IMR-90 (cell line): ENCODE measurements at regions of chr19 and their contacts with region 1.

Region 1: DNA sequence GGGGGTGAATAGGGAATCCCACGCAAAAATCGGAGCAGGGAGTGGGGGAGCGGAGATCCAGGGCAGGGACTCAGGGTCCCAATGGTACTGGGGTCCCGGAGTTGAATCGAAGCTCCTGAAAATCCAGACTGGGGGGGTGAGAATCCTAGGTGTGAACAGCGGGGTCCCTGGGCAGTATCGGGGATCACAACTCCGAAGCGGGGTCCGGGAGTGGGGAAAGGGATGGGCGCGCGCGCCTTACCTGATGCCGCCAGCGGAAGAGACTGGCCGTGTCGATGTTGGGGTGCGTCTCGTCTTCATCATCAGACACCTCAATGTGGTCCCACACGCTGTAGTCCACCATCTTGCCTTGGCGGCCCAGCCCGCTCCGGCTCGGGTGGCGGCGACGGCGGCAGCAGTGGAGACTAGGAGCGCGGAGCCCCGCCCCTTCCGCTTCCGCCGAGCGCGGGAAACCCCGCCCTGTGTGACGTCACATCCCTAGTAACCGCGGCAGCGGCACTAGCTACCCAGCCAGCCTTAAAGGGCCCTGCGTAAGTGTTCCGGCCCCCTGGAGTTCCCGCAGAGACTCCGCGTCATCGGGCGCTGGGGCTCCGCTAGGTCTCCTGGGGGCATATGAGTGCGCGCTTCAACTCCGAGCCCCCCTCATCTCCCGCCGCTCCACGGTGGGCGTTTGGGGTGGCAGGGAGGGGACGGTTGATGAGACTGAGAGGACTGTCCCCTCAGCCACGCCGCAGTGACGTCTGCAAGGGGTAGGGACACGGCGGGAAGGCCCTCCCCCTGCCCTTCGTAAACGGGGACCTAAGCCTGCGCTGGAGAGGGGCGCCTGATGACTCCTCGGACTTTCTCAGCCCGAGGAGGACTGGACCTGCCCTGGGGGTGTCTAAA is at the start of gene CDC37:
- DNase-seq: peak; percentile 97
- ATAC-seq: peak; percentile 79
- H3K4me3 ChIP-seq: peak within 1 kb of the TSS; percentile 98
- H3K27ac ChIP-seq: peak within 1 kb of the TSS; percentile 95
- H3K4me1 ChIP-seq: peaks cover 4% of the 10 kb centered on the region
- H3K27me3 ChIP-seq: no peaks in the 10 kb centered on the region
- CTCF ChIP-seq: no peak
- POLR2A ChIP-seq: peak; percentile 98
- RAD21 ChIP-seq: no peak
- total RNA-seq, gene CDC37: 209 and 248 TPM in 2 replicates

Region 2: DNA sequence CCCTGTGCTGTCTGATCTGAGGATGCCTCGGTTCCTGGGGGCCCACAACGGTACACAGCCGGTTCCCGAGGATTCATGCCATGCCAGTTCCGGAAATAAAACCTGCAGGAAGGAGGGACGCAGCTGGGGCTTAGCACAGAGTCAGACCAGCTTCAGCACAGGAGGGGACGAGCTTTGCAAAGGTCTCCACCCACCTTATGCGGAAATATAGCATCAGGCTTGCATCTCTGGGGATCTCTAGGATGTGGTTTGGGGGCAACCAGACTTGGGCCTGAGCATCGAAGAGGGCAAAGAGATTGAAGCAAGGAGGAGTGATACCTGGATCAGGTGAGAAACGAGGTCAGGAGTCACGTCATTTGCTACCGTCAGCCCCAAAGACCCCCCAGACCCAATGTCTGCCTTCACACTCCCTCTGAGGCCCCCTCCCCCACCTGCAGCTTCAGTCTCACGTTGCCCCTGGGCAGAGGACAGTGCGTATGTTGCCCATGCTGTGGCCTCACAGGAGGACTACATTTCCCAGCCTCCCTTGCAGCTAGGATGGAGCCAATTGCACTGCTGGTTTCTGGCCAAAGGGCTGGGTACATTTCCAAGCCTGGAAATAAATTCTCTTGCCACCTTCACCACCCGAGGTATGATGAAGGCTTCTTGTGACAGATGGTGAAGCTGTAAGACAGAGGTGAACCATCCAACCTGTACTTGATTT is 35.1 kb before region 1 on chr19:
- CTCF ChIA-PET with region 1: interaction called, 11 read pairs
- POLR2A ChIA-PET with region 1: no interaction called
- dilution Hi-C with region 1: no loop called
- in situ Hi-C with region 1: no loop called
- intact Hi-C with region 1: no loop called
- DNase-seq: no peak
- ATAC-seq: no peak
- H3K4me3 ChIP-seq: no peak overlapping the region
- H3K27ac ChIP-seq: no peak overlapping the region
- H3K4me1 ChIP-seq: no peaks in the 10 kb centered on the region
- H3K27me3 ChIP-seq: no peaks in the 10 kb centered on the region
- CTCF ChIP-seq: no peak
- POLR2A ChIP-seq: no peak
- RAD21 ChIP-seq: no peak

Region 3: DNA sequence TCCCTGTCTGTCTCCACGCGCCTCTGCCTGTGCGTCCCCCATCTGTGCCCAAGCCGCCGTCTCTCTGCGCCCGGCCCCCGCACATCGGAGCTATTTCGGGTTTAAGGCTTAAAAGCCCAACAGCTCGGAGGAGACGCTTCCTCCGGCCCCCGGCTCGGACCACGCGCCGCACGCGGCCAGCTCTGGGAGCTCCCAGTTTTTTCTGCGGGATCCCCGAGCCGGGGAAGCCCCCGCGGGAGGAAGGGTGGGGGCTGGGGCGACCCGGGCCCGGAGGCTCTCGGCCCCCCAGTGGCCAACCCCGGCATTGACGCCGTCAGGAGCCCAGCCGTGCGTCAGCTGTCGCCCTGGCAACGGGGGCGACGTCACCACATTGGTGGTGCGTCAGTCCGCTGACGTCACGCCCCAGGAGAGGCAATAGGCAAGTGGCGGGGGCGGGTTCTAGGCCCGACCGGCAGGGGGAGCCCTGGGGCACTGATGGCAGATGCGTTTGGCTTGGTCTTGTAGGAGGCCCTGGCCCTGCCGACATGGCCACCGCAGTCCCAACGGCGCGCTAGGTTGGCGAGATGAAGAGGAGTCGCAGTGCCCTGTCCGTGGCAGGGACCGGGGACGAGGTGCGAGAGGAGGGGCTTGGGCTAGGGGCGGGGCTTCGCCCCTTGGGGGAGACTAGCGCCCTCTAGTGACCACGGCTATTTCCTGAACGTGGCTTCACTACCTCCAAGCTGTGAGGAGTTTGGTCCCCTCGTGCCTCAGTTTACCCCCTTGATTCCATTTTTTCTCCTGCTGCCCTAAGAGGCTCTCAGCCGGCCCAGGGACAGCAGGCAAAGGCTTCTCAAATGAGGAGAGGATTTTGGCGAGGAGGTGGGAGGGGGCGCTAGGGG is 13.2 kb after region 1 on chr19:
- CTCF ChIA-PET with region 1: interaction called, 37 read pairs
- POLR2A ChIA-PET with region 1: no interaction called
- dilution Hi-C with region 1: no loop called
- in situ Hi-C with region 1: no loop called
- intact Hi-C with region 1: no loop called
- DNase-seq: peak; percentile 90
- ATAC-seq: peak; percentile 92
- H3K4me3 ChIP-seq: peak overlapping the region; percentile 59
- H3K27ac ChIP-seq: no peak overlapping the region; the same call in 1 of the 2 replicates
- H3K4me1 ChIP-seq: peaks cover 12% of the 10 kb centered on the region
- H3K27me3 ChIP-seq: peaks cover 30% of the 10 kb centered on the region
- CTCF ChIP-seq: peak; percentile 95
- POLR2A ChIP-seq: no peak
- RAD21 ChIP-seq: peak; percentile 37

Region 4: GRCh38 chr19:10424011-10424637 is 20.7 kb after region 1 on chr19:
- CTCF ChIA-PET with region 1: interaction called, 3 read pairs
- POLR2A ChIA-PET with region 1: no interaction called
- dilution Hi-C with region 1: no loop called
- in situ Hi-C with region 1: no loop called
- intact Hi-C with region 1: loop called (anchors 1 kb)
- DNase-seq: peak; percentile 68
- ATAC-seq: peak; percentile 94
- H3K4me3 ChIP-seq: peak overlapping the region; percentile 39
- H3K27ac ChIP-seq: no peak overlapping the region
- H3K4me1 ChIP-seq: peaks cover 9% of the 10 kb centered on the region; the same call in 1 of the 2 replicates
- H3K27me3 ChIP-seq: peaks cover 34% of the 10 kb centered on the region
- CTCF ChIP-seq: peak; percentile 88
- POLR2A ChIP-seq: no peak
- RAD21 ChIP-seq: peak; percentile 55

Region 5: GRCh38 chr19:10695401-10696398 is 292.3 kb after region 1 on chr19:
- CTCF ChIA-PET with region 1: interaction called, 3 read pairs
- POLR2A ChIA-PET with region 1: interaction called, 5 read pairs
- dilution Hi-C with region 1: no loop called
- in situ Hi-C with region 1: no loop called
- intact Hi-C with region 1: loop called (anchors 10 kb)
- DNase-seq: peak; percentile 91
- ATAC-seq: peak; percentile 99
- H3K4me3 ChIP-seq: no peak overlapping the region
- H3K27ac ChIP-seq: no peak overlapping the region
- H3K4me1 ChIP-seq: no peaks in the 10 kb centered on the region
- H3K27me3 ChIP-seq: no peaks in the 10 kb centered on the region
- CTCF ChIP-seq: 0 out of 2 replicates have a peak, but pooled peaks have one; percentile 4
- POLR2A ChIP-seq: no peak
- RAD21 ChIP-seq: no peak